ENCODE measurements at regions of chr10 and their contacts with region 1.

Region 1: GRCh38 chr10:72273410-72274212 is at the start of gene DDIT4:
- DNase-seq: peak; percentile 100
- ATAC-seq: peak; percentile 95
- H3K4me3 ChIP-seq: peak within 1 kb of the TSS; percentile 37 to 52
- H3K27ac ChIP-seq: peak within 1 kb of the TSS in 1 of 2 donors; percentile 78
- H3K4me1 ChIP-seq: no peaks in the 10 kb centered on the region
- H3K27me3 ChIP-seq: peaks cover 0 to 2% of the 10 kb centered on the region in 2 donors
- total RNA-seq, gene DDIT4: 104 to 126 TPM

Region 2: GRCh38 chr10:72186258-72186981 is 87.2 kb before region 1 on chr10:
- intact Hi-C with region 1: no loop called
- DNase-seq: no peak
- ATAC-seq: peak; percentile 89
- H3K4me3 ChIP-seq: no peak overlapping the region
- H3K27ac ChIP-seq: no peak overlapping the region
- H3K4me1 ChIP-seq: no peaks in the 10 kb centered on the region
- H3K27me3 ChIP-seq: no peaks in the 10 kb centered on the region

Region 3: GRCh38 chr10:72215652-72216549 is 57.7 kb before region 1 on chr10 and contains the starts of genes ANAPC16 and ASCC1:
- intact Hi-C with region 1: loop called (anchors 1 to 5 kb)
- DNase-seq: peak; percentile 95 to 97
- ATAC-seq: peak; percentile 99
- H3K4me3 ChIP-seq: peak within 1 kb of the TSS; percentile 86 to 98
- H3K27ac ChIP-seq: peak within 1 kb of the TSS; percentile 88 to 98
- H3K4me1 ChIP-seq: peaks cover 0 to 3% of the 10 kb centered on the region in 2 donors
- H3K27me3 ChIP-seq: no peaks in the 10 kb centered on the region
- total RNA-seq, gene ANAPC16: 70.7 to 75.7 TPM
- total RNA-seq, gene ASCC1: 23.3 to 32.3 TPM

Region 4: GRCh38 chr10:72319416-72320254 is 46.0 kb after region 1 on chr10:
- intact Hi-C with region 1: no loop called
- DNase-seq: peak; percentile 97
- ATAC-seq: peak; percentile 91
- H3K4me3 ChIP-seq: peak overlapping the region in 1 of 2 donors; percentile 38
- H3K27ac ChIP-seq: no peak overlapping the region
- H3K4me1 ChIP-seq: peaks cover 0 to 4% of the 10 kb centered on the region in 2 donors
- H3K27me3 ChIP-seq: no peaks in the 10 kb centered on the region